CD8-positive, alpha-beta memory T cell (primary cell): ENCODE measurements at regions of chr10 and their contacts with region 1.

Region 1: DNA sequence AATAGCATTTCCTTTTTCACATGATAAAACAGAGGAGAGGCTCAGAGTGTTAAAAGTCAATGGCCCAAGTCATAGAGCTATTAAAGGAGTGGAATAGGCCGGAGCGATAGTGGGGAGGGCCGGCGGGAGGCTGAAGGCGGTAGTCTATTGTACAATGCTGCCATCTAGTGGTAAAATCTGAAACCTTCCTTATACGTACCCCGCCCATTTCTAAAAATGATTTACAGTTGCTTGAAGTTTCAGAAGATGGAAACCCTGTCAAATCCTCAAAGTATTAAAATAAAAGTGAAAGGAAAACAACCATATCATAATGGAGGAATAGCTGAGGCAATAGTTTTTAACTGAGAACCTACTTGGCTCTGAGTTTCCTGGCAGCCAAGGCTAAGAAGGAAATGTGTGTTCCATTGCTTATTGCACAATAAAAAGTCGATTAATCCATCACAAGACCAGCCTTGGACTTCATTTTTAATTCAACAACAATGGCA is 209.1 kb downstream of the CCSER2 start:
- DNase-seq: peak in 3 of 5 donors; percentile 6 to 50 (median 45)
- H3K4me3 ChIP-seq: no peak overlapping the region
- H3K4me3 Mint-ChIP-seq: peak overlapping the region in 1 of 7 donors; percentile 64
- H3K27ac ChIP-seq: no peak overlapping the region
- H3K27ac Mint-ChIP-seq: no peak overlapping the region
- H3K4me1 ChIP-seq: no peaks in the 10 kb centered on the region
- H3K4me1 Mint-ChIP-seq: peaks cover 10 to 15% (median 12%) of the 10 kb centered on the region in 3 donors
- H3K27me3 ChIP-seq: no peaks in the 10 kb centered on the region
- H3K27me3 Mint-ChIP-seq: peaks cover 19 to 33% of the 10 kb centered on the region in 2 donors

Region 2: DNA sequence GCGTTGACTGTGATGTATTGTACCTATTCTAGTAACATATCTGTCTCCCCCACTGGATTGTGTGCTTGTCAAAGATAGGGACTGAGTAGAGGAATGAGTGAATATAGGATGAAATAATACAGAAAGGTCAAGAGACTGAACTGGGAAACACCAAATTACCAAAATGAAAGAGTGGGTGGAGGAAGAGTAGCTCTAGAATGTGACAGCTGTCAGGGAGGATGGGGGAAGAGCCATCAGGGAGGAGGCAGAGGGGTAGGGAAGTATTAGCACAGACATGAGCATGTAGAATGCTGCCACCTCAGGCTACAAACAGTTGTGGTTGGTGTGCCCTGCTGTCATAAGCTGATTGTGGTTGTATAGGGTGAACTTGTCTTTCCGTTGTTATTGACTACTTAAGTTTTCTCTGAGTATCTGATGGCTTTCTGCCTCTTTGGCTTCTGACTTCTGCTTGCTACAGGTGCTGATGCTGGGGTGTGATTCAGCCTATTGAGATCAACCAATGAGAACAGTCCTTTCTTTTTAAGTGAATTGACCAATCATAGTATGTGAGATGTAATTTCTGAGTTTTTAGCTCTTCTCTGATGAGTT is 203.5 kb before region 1 on chr10:
- CTCF ChIA-PET with region 1: interaction called, 13 read pairs
- POLR2A ChIA-PET with region 1: interaction called, 3 read pairs
- DNase-seq: peak; percentile 56 to 93 (median 86)
- H3K4me3 ChIP-seq: peak overlapping the region; percentile 12
- H3K4me3 Mint-ChIP-seq: peak overlapping the region; percentile 31 to 81 (median 63)
- H3K27ac ChIP-seq: peak overlapping the region; percentile 55
- H3K27ac Mint-ChIP-seq: peak overlapping the region in 2 of 8 donors; percentile 83 to 95
- H3K4me1 ChIP-seq: peaks cover 72% of the 10 kb centered on the region
- H3K4me1 Mint-ChIP-seq: peaks cover 32 to 55% (median 40%) of the 10 kb centered on the region in 3 donors
- H3K27me3 ChIP-seq: no peaks in the 10 kb centered on the region
- H3K27me3 Mint-ChIP-seq: no peaks in the 10 kb centered on the region

Region 3: GRCh38 chr10:84375011-84375410 is 162.5 kb before region 1 on chr10:
- CTCF ChIA-PET with region 1: interaction called, 41 read pairs
- POLR2A ChIA-PET with region 1: no interaction called
- DNase-seq: peak in 4 of 5 donors; percentile 6 to 44 (median 42)
- H3K4me3 ChIP-seq: no peak overlapping the region
- H3K4me3 Mint-ChIP-seq: peak overlapping the region in 1 of 7 donors; percentile 16
- H3K27ac ChIP-seq: no peak overlapping the region
- H3K27ac Mint-ChIP-seq: peak overlapping the region; percentile 12 to 82 (median 57)
- H3K4me1 ChIP-seq: no peaks in the 10 kb centered on the region
- H3K4me1 Mint-ChIP-seq: peaks cover 48 to 82% (median 69%) of the 10 kb centered on the region in 3 donors
- H3K27me3 ChIP-seq: no peaks in the 10 kb centered on the region
- H3K27me3 Mint-ChIP-seq: no peaks in the 10 kb centered on the region

Region 4: GRCh38 chr10:84548869-84549268 is 11.4 kb after region 1 on chr10:
- CTCF ChIA-PET with region 1: interaction called, 23 read pairs
- POLR2A ChIA-PET with region 1: no interaction called
- DNase-seq: no peak
- H3K4me3 ChIP-seq: no peak overlapping the region
- H3K4me3 Mint-ChIP-seq: no peak overlapping the region
- H3K27ac ChIP-seq: no peak overlapping the region
- H3K27ac Mint-ChIP-seq: no peak overlapping the region
- H3K4me1 ChIP-seq: no peaks in the 10 kb centered on the region
- H3K4me1 Mint-ChIP-seq: no peaks in the 10 kb centered on the region
- H3K27me3 ChIP-seq: no peaks in the 10 kb centered on the region
- H3K27me3 Mint-ChIP-seq: peaks cover 5 to 38% of the 10 kb centered on the region in 2 donors